Panc1 (cell line): ENCODE measurements at regions of chr2 and their contacts with region 1.

Region 1: GRCh38 chr2:173326806-173327205 is 27.9 kb upstream of the CDCA7 start:
- DNase-seq: no peak
- ATAC-seq: no peak
- H3K4me3 ChIP-seq: no peak overlapping the region
- H3K27ac ChIP-seq: no peak overlapping the region
- H3K4me1 ChIP-seq: no peaks in the 10 kb centered on the region
- H3K27me3 ChIP-seq: no peaks in the 10 kb centered on the region
- CTCF ChIP-seq: no peak

Region 2: DNA sequence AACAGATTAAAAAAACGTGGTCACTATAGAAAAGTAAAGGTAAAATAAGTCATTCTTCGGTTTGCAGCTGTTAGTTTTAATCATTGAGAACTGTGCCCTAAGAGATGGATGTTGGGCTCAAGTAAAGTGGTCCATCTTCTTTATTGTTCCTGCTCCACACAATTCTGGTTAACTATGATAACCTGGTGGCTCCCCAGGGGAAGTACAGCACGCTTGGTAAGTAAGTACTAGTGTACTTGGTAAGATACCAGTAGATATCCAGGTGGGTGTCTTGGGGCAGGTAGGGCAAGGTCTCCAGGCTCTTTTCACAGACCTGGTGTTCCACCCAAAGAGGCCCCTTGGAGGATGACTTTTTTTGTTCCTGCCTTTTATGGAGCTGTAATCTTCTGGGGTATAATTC is 1192.5 kb before region 1 on chr2:
- CTCF ChIA-PET with region 1: no interaction called
- POLR2A ChIA-PET with region 1: interaction called, 19 read pairs
- in situ Hi-C with region 1: no loop called
- intact Hi-C with region 1: no loop called
- DNase-seq: no peak
- ATAC-seq: no peak
- H3K4me3 ChIP-seq: no peak overlapping the region
- H3K27ac ChIP-seq: no peak overlapping the region
- H3K4me1 ChIP-seq: no peaks in the 10 kb centered on the region
- H3K27me3 ChIP-seq: no peaks in the 10 kb centered on the region; the same call in 1 of the 2 replicates
- CTCF ChIP-seq: peak; percentile 14; the same call in 1 of the 2 replicates

Region 3: GRCh38 chr2:173217116-173217840 is 109.5 kb before region 1 on chr2:
- CTCF ChIA-PET with region 1: interaction called, 11 read pairs
- POLR2A ChIA-PET with region 1: no interaction called
- in situ Hi-C with region 1: no loop called
- intact Hi-C with region 1: no loop called
- DNase-seq: no peak
- ATAC-seq: no peak
- H3K4me3 ChIP-seq: no peak overlapping the region
- H3K27ac ChIP-seq: peak overlapping the region; percentile 79; the same call in 1 of the 2 replicates
- H3K4me1 ChIP-seq: peaks cover 16% of the 10 kb centered on the region
- H3K27me3 ChIP-seq: no peaks in the 10 kb centered on the region
- CTCF ChIP-seq: no peak

Region 4: GRCh38 chr2:173311844-173312606 is 14.8 kb before region 1 on chr2:
- CTCF ChIA-PET with region 1: no interaction called
- POLR2A ChIA-PET with region 1: no interaction called
- in situ Hi-C with region 1: no loop called
- intact Hi-C with region 1: no loop called
- DNase-seq: no peak
- ATAC-seq: no peak
- H3K4me3 ChIP-seq: no peak overlapping the region
- H3K27ac ChIP-seq: no peak overlapping the region
- H3K4me1 ChIP-seq: no peaks in the 10 kb centered on the region; the same call in 1 of the 2 replicates
- H3K27me3 ChIP-seq: no peaks in the 10 kb centered on the region
- CTCF ChIP-seq: no peak

Region 5: DNA sequence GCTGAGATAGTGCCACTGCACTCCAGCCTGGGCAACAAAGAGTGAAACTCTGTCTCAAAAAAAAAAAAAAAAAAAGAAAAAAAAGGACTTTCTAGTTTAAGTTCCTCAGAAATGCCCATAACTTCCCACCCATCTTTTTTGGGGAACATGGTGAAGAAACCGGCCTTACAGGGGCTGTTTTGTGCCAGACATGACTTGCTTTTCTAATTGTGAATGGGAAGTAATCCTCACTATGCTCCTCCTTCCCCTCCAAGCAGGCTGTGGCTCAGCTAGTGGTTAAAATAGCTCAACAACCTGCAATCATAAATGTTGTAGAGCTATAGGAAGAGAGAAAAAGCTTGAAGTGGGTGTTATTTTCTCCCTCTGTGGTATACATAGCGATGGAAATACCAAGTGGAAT is 955.6 kb after region 1 on chr2:
- CTCF ChIA-PET with region 1: no interaction called
- POLR2A ChIA-PET with region 1: no interaction called
- in situ Hi-C with region 1: no loop called
- intact Hi-C with region 1: no loop called
- DNase-seq: no peak
- ATAC-seq: no peak
- H3K4me3 ChIP-seq: no peak overlapping the region
- H3K27ac ChIP-seq: no peak overlapping the region
- H3K4me1 ChIP-seq: no peaks in the 10 kb centered on the region
- H3K27me3 ChIP-seq: peaks cover 9% of the 10 kb centered on the region
- CTCF ChIP-seq: no peak